ENCODE measurements at regions of chr6 and their contacts with region 1.

Region 1: GRCh38 chr6:10694302-10695085 is at the starts of genes C6orf52 and PAK1IP1:
- DNase-seq: peak; percentile 79 to 90
- H3K4me3 ChIP-seq: peak within 1 kb of the TSS; percentile 98
- H3K27ac ChIP-seq: peak within 1 kb of the TSS; percentile 86
- H3K4me1 ChIP-seq: peaks cover 16% of the 10 kb centered on the region
- H3K27me3 ChIP-seq: no peaks in the 10 kb centered on the region
- CTCF ChIP-seq: no peak
- total RNA-seq, gene C6orf52: 6.1 and 6.2 TPM in 2 replicates
- total RNA-seq, gene PAK1IP1: 14.3 and 15.2 TPM in 2 replicates

Region 2: DNA sequence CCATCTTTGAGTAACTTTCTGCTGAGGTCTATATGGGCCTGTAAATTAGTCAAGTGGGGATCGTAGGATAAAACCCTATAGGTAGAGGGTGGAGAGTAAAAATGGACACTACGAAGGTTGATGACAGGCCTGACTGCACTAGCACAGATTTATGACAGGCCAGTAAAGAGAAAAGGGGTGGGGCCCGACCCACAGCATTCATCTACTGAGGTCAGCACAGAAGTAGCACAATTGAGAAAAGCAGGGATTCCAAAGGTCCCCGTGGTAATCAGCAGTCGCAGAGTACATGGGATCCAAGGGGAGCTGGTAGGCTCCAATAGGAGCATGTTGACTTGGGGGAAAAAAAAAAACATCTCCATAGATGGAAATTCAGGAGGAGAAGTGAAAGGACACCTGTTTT is 940.0 kb before region 1 on chr6:
- CTCF ChIA-PET with region 1: no interaction called
- POLR2A ChIA-PET with region 1: no interaction called
- intact Hi-C with region 1: no loop called
- DNase-seq: no peak
- H3K4me3 ChIP-seq: no peak overlapping the region
- H3K27ac ChIP-seq: no peak overlapping the region
- H3K4me1 ChIP-seq: no peaks in the 10 kb centered on the region
- H3K27me3 ChIP-seq: no peaks in the 10 kb centered on the region
- CTCF ChIP-seq: no peak

Region 3: GRCh38 chr6:10478187-10479040 is 216.1 kb before region 1 on chr6:
- CTCF ChIA-PET with region 1: interaction called, 11 read pairs
- POLR2A ChIA-PET with region 1: interaction called, 3 read pairs
- intact Hi-C with region 1: loop called (anchors 10 kb)
- DNase-seq: peak; percentile 8 to 37
- H3K4me3 ChIP-seq: no peak overlapping the region
- H3K27ac ChIP-seq: no peak overlapping the region
- H3K4me1 ChIP-seq: peaks cover 11% of the 10 kb centered on the region
- H3K27me3 ChIP-seq: no peaks in the 10 kb centered on the region
- CTCF ChIP-seq: peak; percentile 78

Region 4: GRCh38 chr6:10510592-10511367 is 183.7 kb before region 1 on chr6:
- CTCF ChIA-PET with region 1: interaction called, 3 read pairs
- POLR2A ChIA-PET with region 1: no interaction called
- intact Hi-C with region 1: loop called (anchors 1 kb)
- DNase-seq: peak in 1 of 2 experiments; percentile 72
- H3K4me3 ChIP-seq: no peak overlapping the region; the same call in 1 of the 2 replicates
- H3K27ac ChIP-seq: no peak overlapping the region
- H3K4me1 ChIP-seq: peaks cover 10% of the 10 kb centered on the region; the same call in 1 of the 2 replicates
- H3K27me3 ChIP-seq: no peaks in the 10 kb centered on the region
- CTCF ChIP-seq: peak; percentile 72

Region 5: DNA sequence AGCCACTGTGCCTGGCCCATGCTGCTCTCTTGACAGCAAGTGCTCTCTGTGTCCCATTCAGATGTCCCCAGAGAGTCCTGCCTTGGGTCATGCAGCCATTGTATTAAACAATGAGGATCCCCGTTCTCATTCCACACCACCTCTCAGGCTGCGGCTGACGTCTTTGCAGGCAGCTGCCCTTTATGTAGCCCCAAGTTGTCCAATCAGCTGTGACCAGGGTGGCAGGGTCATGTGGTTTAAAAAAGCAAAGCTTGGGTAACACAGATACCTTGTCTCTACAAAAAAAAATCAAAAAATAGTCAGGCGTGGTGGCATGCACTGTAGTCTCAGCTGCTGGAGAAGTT is 160.1 kb before region 1 on chr6:
- CTCF ChIA-PET with region 1: no interaction called
- POLR2A ChIA-PET with region 1: interaction called, 5 read pairs
- intact Hi-C with region 1: loop called (anchors 5 kb)
- DNase-seq: no peak
- H3K4me3 ChIP-seq: no peak overlapping the region
- H3K27ac ChIP-seq: no peak overlapping the region
- H3K4me1 ChIP-seq: peaks cover 23% of the 10 kb centered on the region
- H3K27me3 ChIP-seq: no peaks in the 10 kb centered on the region
- CTCF ChIP-seq: no peak

Region 6: DNA sequence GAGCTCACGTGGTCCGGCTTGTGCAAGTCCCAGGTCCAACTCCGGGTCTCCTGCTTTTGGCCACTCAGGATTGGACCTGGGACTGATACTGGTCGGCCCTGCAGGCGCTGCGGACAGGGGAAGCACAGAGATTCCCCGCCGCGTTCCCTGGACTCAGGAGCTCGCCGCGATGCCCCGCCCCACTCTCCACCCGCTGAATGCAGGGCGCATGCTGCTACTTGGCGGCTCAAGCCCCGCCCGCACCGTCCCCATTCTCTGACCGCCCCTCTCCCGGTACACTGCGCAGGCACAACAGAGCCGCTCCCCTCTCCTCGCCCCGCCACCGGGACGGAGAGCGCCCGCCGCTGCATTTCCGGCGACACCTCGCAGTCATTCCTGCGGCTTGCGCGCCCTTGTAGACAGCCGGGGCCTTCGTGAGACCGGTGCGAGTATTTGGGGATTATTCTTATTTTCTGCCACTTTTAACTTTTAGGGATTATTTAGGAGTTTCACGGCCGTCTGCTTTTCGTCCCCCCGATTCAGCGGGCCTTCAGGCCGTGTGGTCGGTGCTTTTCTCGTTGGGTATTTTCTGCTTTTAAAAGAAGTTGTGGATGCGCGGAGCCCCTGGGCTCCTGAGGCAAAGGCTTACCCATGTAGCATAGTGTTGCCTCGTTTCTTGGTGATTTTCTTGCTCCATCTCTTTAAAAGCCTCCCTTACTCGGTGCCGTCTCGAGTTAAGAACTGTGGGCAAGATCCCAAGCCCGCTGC is 28.5 kb after region 1 on chr6 and contains the start of gene TMEM14C:
- CTCF ChIA-PET with region 1: interaction called, 5 read pairs
- POLR2A ChIA-PET with region 1: interaction called, 5 read pairs
- intact Hi-C with region 1: loop called (anchors 1 kb)
- DNase-seq: peak; percentile 85 to 99
- H3K4me3 ChIP-seq: peak within 1 kb of the TSS; percentile 96
- H3K27ac ChIP-seq: peak within 1 kb of the TSS; percentile 85
- H3K4me1 ChIP-seq: 0 out of 2 replicates have a peak, but pooled peaks cover 10% of the 10 kb centered on the region
- H3K27me3 ChIP-seq: no peaks in the 10 kb centered on the region
- CTCF ChIP-seq: no peak
- total RNA-seq, gene TMEM14C: 154 and 166 TPM in 2 replicates

Region 7: DNA sequence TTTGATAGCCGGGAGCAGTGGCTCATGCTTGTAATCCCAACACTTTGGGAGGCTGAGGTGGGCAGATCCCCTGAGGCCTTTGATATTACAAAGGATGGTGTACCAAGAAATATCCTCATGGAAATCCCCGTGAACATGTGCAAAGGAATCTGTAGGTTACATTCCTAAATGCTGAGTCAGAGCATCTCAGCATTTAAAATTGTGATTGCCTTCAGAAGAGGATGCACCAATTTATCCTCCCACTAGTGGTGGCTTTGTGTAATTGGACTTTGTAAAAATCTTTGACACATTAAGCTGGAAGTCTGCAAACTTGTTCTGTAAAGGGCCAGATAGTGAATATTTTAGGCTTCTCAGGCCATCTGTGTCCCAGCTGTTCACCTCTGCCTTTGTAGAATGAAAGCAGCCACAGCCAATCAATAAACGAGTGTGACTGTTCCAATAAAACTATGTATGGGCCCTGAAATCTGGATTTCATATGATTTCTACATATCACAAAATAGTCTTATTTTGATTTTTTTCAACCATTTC is 64.9 kb after region 1 on chr6:
- CTCF ChIA-PET with region 1: no interaction called
- POLR2A ChIA-PET with region 1: no interaction called
- intact Hi-C with region 1: loop called (anchors 1 kb)
- DNase-seq: peak; percentile 71 to 95
- H3K4me3 ChIP-seq: no peak overlapping the region; the same call in 1 of the 2 replicates
- H3K27ac ChIP-seq: peak overlapping the region; percentile 82
- H3K4me1 ChIP-seq: peaks cover 21% of the 10 kb centered on the region
- H3K27me3 ChIP-seq: no peaks in the 10 kb centered on the region
- CTCF ChIP-seq: peak; percentile 77

Region 8: DNA sequence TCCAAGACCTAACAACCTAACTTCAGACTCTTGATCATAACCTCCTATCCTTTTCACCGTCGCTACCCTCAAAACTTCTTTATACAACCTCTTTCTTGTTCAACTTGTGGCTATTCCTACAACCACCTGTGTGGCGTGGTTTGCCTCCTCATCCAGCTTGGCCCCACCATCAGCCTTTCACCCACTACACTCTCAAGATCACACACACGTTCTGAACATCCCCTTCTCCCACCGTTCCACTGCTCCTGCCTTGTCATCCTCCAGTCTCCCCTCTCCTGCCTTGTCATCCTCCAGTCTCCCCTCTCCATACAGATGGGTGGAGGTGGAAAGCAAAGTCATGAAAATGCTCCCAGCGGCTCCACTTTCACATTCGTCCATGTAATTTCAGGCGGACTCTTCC is 129.8 kb after region 1 on chr6:
- CTCF ChIA-PET with region 1: no interaction called
- POLR2A ChIA-PET with region 1: no interaction called
- intact Hi-C with region 1: no loop called
- DNase-seq: no peak
- H3K4me3 ChIP-seq: no peak overlapping the region
- H3K27ac ChIP-seq: no peak overlapping the region
- H3K4me1 ChIP-seq: no peaks in the 10 kb centered on the region
- H3K27me3 ChIP-seq: no peaks in the 10 kb centered on the region
- CTCF ChIP-seq: no peak